ENCODE measurements at regions of chr22 and their contacts with region 1.

Region 1: DNA sequence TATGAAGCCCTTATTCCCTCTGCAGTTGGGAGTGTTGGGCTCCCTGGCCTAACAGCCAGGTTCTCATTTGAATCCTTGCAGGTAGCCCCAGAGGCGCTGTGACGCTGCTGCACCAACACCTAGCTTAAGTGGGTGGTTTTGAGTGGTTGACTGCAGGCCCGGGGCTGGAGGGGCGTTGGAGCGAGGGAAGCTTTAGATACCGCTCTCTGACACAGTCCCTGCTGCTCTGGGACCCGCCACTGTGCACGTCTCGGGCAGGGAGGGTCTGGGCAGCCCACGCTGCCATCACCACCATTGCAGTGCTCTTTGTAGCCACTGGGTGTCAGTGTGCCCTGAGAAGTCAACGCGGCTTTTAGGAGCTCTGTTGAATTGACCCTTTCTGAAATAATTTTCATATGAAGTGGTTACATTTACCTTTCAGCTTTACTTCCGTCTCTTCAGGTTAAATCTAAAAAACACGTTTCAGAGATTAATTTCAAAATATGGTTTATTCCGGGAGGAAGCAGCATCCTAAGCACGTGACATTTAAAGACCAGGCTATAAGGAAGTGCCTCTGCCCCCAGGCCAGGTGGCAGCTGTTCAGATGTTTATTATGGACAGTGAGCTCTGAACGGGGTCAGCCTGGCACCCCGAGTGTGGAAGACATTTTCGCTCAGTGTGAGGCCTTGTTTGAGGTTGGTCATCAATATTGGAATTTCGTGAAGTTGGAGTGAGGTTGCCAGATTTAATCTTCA is 30.9 kb upstream of the PARVB start:
- H3K4me3 ChIP-seq: no peak overlapping the region
- H3K27ac ChIP-seq: no peak overlapping the region
- H3K4me1 ChIP-seq: no peaks in the 10 kb centered on the region
- CTCF ChIP-seq: peak; percentile 46; the same call in 1 of the 2 replicates

Region 2: DNA sequence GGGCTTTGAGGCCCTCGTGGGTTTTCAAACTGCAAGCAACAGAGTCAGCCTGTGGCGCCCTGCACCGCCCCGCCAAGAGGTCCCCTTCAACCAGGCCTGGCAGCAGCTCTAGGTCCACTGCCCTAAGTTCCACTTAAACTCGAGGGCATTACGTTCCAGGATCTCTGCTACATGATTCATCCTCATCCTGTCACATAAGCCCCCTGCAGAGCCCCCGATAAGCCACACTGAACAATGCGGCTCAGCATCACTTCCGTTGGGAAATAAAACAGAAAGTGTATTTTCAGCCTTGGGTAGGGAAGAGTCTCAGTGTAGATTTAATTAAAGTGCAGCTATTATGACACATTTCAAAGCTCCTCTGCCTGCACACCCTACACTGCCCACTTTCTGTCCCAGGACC is 155.5 kb before region 1 on chr22:
- CTCF ChIA-PET with region 1: no interaction called
- POLR2A ChIA-PET with region 1: no interaction called
- H3K4me3 ChIP-seq: no peak overlapping the region
- H3K27ac ChIP-seq: no peak overlapping the region
- H3K4me1 ChIP-seq: no peaks in the 10 kb centered on the region
- CTCF ChIP-seq: no peak

Region 3: GRCh38 chr22:43972931-43973462 is 20.2 kb before region 1 on chr22:
- CTCF ChIA-PET with region 1: interaction called, 10 read pairs
- POLR2A ChIA-PET with region 1: no interaction called
- H3K4me3 ChIP-seq: no peak overlapping the region
- H3K27ac ChIP-seq: no peak overlapping the region
- H3K4me1 ChIP-seq: no peaks in the 10 kb centered on the region
- CTCF ChIP-seq: no peak

Region 4: DNA sequence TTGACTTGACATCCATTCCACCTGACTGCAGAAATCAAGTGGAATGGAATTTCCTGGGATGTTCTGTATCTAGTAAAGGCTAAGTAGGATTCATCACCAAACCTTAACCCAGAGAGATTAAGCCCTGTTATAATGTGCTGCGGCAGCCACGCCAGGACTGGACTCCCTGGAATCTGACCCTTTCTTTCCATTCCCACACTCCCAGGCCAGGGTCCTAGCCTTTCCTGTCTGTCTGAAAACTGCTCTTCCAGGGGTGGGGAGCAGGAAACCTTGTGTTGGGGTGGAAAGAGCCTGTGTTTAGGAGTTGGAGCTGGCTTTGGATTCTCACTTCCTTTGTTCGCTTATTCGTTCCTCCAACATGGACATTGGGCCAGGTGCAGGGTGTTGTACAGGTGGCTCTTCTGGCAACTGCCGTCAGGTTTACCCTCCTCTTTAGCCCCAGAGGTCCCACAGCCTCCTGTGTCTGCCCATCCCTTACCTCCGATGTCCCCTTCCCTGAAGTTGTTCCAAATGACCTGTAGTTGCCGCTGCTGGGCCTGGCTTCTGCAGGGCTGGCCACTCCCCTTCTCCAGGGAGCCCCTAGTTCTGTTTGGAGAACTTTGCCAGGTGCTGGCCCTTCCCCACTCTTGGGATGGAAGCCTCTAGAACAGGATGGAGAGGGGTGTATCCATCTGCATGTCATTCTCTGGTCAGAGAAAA is 10.4 kb after region 1 on chr22:
- CTCF ChIA-PET with region 1: interaction called, 39 read pairs
- POLR2A ChIA-PET with region 1: no interaction called
- H3K4me3 ChIP-seq: no peak overlapping the region
- H3K27ac ChIP-seq: no peak overlapping the region
- H3K4me1 ChIP-seq: no peaks in the 10 kb centered on the region
- CTCF ChIP-seq: no peak

Region 5: GRCh38 chr22:44020981-44021380 is 27.8 kb after region 1 on chr22:
- CTCF ChIA-PET with region 1: interaction called, 21 read pairs
- POLR2A ChIA-PET with region 1: no interaction called
- H3K4me3 ChIP-seq: no peak overlapping the region
- H3K27ac ChIP-seq: no peak overlapping the region
- H3K4me1 ChIP-seq: peaks cover 8% of the 10 kb centered on the region
- CTCF ChIP-seq: no peak

Region 6: DNA sequence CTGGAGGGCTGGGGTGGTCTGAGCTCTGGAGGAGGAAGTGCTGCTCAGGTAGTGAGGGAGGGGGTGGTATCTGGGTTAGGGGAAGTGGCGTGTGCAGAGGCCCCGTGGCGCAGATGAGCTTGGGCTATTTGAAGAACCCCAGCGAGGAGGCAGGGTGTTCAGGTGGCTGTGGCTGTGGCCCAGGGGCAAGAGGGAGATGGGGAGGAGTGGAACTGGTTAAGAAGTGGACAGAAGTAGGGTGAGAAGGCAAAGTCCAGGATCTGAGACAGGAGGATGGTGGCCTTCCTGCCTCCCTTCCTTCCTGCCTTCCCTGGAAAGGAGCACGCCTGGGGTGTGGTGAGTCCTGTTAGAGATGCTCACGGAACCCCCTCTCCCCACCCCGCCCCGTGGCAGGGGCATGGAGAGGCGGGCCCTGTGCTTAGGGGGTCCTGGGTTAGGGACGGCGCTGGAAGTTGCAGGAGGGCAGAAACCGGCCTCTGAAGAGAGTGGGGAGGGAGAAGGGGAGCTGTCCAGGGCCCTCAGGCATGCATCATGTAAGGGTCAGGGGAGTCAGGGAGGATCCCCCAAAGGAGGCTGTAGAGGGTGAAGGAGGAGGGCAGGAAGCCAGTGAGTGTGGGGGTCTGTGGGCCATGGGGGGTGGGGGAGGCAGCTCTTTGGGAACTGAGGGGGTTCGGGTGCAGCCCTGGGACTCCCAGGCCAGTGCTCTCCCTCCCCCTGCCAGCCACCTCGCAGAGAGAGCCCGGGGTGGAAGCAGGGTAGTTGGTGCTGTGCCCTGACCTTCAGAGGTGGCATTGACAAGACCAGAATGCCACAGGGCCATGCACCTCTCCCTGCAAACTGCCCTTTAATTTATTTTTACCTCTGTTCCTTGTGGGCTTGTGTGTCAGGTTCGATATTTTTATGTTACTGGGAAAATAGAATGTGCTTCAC is 123.8 kb after region 1 on chr22:
- CTCF ChIA-PET with region 1: no interaction called
- POLR2A ChIA-PET with region 1: no interaction called
- H3K4me3 ChIP-seq: no peak overlapping the region
- H3K27ac ChIP-seq: no peak overlapping the region
- H3K4me1 ChIP-seq: no peaks in the 10 kb centered on the region
- CTCF ChIP-seq: no peak

Region 7: DNA sequence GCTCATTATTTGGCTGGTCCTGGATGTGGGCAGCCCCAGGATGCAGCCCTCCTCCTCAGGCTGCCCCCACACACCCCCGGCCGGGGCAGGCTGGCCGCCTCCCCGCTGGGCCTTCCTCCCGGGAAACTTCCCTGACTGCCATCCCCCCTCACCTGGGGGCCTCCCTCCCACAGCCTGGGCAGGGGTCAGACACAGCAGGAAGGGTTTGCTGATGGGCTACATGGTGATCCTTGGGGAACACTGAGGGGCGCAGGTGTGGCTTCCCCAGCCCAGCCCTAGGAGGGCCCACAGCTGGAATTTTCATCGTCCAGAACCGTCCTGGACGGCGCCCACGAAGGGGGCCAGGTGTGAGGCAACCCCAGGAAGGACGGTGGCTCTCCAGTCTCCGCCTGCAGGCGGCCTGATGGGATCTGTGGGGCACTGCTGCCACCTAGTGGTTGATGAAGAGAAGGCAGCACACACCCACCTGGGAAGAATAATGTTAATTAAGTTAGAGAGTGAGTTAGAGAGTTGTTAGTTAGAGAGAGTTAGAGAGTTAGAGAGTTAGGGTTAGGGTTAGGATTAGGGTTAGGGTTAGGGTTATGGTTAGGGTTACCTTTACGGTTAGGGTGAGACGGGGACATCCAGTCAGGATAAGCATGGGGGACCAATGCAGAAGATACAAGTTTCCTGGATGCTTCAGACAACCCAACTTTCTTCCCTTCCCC is 632.9 kb after region 1 on chr22:
- CTCF ChIA-PET with region 1: interaction called, 84 read pairs
- POLR2A ChIA-PET with region 1: no interaction called
- H3K4me3 ChIP-seq: no peak overlapping the region
- H3K27ac ChIP-seq: no peak overlapping the region
- H3K4me1 ChIP-seq: no peaks in the 10 kb centered on the region
- CTCF ChIP-seq: peak; percentile 98

Measured in HEK293 (cell line).